A673 (cell line): ENCODE measurements at regions of chr9 and their contacts with region 1.

Region 1: GRCh38 chr9:20622330-20623020 is at the start of gene MLLT3:
- DNase-seq: peak; percentile 95
- H3K4me3 ChIP-seq: peak within 1 kb of the TSS; percentile 74
- H3K27ac ChIP-seq: peak within 1 kb of the TSS; percentile 87
- H3K4me1 ChIP-seq: peaks cover 27% of the 10 kb centered on the region
- H3K27me3 ChIP-seq: no peaks in the 10 kb centered on the region
- CTCF ChIP-seq: no peak
- total RNA-seq, gene MLLT3: 24.2 and 28.5 TPM in 2 replicates

Region 2: DNA sequence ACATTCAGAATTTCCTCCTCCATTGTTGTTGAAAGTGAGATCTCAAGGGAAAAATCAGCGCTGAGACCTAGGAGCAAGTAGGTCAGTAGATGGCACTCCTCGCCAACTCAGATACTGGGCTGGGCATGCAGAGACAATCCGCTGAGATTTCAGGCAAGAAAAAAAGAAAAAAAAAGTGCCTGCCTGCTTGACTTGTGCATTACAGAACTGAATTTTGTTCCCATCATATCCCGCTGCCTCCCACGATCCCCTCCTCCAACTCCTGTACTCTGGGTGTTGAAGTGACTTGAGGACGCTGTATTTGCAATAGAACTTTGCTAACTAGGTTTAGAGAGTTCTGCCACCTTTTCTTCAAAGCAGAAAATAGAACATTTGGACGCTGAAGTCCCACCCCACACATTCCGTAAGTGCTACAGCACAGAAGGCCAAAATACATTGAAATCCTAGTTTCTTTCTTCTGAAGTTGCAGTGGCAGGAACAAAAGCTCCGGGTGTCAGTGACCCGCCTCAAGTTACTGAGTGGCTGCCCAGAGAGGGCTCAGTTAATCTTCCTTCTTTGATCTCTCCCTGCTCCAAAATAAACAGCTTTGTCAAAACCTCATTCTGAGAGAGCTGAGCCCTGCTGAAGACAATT is 266.0 kb before region 1 on chr9:
- CTCF ChIA-PET with region 1: interaction called, 3 read pairs
- POLR2A ChIA-PET with region 1: no interaction called
- intact Hi-C with region 1: loop called (anchors 2 kb)
- DNase-seq: peak; percentile 84
- H3K4me3 ChIP-seq: no peak overlapping the region
- H3K27ac ChIP-seq: peak overlapping the region; percentile 53
- H3K4me1 ChIP-seq: peaks cover 52% of the 10 kb centered on the region
- H3K27me3 ChIP-seq: no peaks in the 10 kb centered on the region
- CTCF ChIP-seq: peak; percentile 68

Region 3: GRCh38 chr9:20526500-20527319 is 95.8 kb before region 1 on chr9:
- CTCF ChIA-PET with region 1: no interaction called
- POLR2A ChIA-PET with region 1: no interaction called
- intact Hi-C with region 1: no loop called
- DNase-seq: no peak
- H3K4me3 ChIP-seq: no peak overlapping the region
- H3K27ac ChIP-seq: no peak overlapping the region
- H3K4me1 ChIP-seq: no peaks in the 10 kb centered on the region
- H3K27me3 ChIP-seq: no peaks in the 10 kb centered on the region
- CTCF ChIP-seq: no peak

Region 4: GRCh38 chr9:20693068-20693467 is 70.6 kb after region 1 on chr9:
- CTCF ChIA-PET with region 1: no interaction called
- POLR2A ChIA-PET with region 1: no interaction called
- intact Hi-C with region 1: no loop called
- DNase-seq: no peak
- H3K4me3 ChIP-seq: no peak overlapping the region
- H3K27ac ChIP-seq: no peak overlapping the region
- H3K4me1 ChIP-seq: peaks cover 8% of the 10 kb centered on the region
- H3K27me3 ChIP-seq: no peaks in the 10 kb centered on the region
- CTCF ChIP-seq: no peak

Region 5: DNA sequence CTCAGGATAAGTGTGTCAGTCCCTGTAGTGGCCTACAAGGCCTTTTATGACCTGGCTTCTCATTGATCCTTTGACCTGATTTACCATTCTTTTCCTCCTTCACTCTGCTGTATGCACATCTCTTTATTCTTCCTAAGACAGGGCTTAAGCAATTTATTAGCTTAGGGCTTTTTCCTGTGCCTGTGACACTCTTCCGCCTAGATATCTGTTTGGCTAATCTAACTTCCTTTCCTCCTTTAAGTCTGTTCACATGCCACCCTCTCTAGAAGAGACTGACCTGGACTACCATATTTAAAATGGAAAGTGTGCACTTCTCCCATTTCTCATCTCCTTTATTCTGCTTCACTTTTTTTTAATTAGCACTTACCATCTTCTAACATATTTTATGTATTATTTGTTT is 90.7 kb after region 1 on chr9:
- CTCF ChIA-PET with region 1: interaction called, 3 read pairs
- POLR2A ChIA-PET with region 1: no interaction called
- intact Hi-C with region 1: loop called (anchors 1 kb)
- DNase-seq: peak; percentile 75
- H3K4me3 ChIP-seq: no peak overlapping the region
- H3K27ac ChIP-seq: peak overlapping the region; percentile 98
- H3K4me1 ChIP-seq: peaks cover 53% of the 10 kb centered on the region
- H3K27me3 ChIP-seq: no peaks in the 10 kb centered on the region
- CTCF ChIP-seq: no peak

Region 6: DNA sequence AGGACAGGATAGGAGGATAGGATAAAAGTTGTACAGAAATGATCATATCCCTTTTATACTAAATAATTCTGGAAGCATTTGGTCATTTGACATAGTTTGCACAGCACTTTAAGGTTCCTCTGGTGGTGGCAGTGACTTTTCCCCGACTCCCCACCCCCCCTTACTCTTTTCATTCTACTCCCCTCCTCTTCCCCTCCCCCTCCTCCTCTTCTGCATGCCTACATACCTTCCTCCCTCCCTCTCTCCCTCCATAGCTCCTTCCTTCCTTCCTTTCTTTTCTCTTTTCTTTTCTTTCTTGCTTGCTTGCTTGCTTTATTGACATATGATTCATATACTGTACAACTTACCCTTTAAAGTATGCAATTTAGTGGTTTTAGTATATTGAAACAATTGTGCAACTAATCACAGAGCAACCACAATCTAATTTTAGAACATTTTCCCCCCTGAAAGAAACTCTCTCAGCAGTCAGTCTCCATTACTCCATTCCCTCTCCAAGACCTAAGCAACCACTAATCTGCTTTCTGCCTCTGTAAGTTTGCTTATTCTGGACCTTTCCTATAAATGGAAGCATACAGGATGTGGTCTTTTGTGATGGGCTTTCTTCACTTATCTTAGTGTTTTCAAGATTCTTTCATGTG is 250.0 kb after region 1 on chr9:
- CTCF ChIA-PET with region 1: no interaction called
- POLR2A ChIA-PET with region 1: no interaction called
- intact Hi-C with region 1: loop called (anchors 10 kb)
- DNase-seq: peak; percentile 3
- H3K4me3 ChIP-seq: no peak overlapping the region
- H3K27ac ChIP-seq: no peak overlapping the region
- H3K4me1 ChIP-seq: peaks cover 10% of the 10 kb centered on the region
- H3K27me3 ChIP-seq: no peaks in the 10 kb centered on the region
- CTCF ChIP-seq: no peak

Region 7: DNA sequence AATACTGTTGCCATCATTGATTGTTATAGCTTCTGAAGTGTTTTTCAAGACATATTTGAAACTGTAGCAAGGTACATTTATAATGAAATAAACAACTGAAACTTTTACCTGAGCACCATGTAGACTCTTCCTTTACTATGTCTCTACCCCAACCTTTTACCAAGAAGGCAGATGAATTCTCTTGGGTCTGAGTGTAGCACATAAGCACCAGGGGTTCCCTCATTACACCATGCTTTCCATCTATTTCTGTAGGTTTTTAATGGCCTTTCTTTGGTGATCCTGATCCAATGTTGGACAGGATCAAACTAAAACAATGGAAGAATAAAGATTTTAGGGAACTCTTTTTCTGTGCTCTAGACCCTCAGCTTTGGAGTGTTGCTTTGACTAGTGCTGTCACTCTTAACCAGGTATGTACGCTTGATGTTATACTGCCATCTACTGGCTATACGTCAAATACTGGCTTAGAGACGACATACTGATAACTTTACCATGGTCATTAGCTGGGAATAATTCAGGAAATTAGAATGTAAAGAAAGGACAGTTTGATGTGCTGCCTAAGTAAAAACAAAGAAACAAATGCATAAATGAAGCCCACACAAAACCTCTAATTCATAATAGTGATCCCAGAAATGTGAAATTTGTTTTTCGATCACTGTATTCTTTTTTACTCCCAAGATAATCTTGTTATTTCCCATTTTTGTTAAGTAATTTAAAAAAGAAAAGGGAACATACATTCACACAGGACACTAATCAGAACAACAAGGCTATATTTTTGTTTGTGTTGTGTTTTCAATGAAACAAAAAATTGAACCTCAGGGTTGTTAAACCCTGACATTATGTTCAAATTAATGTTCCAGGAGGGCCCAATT is 488.5 kb after region 1 on chr9:
- CTCF ChIA-PET with region 1: interaction called, 10 read pairs
- POLR2A ChIA-PET with region 1: no interaction called
- intact Hi-C with region 1: no loop called
- DNase-seq: peak; percentile 74
- H3K4me3 ChIP-seq: no peak overlapping the region
- H3K27ac ChIP-seq: no peak overlapping the region
- H3K4me1 ChIP-seq: peaks cover 4% of the 10 kb centered on the region
- H3K27me3 ChIP-seq: no peaks in the 10 kb centered on the region
- CTCF ChIP-seq: peak; percentile 69